ENCODE measurements at regions of chr16 and their contacts with region 1.

Region 1: GRCh38 chr16:70728150-70728549 is 42.3 kb upstream of the MTSS2 start:
- DNase-seq: no peak
- H3K4me3 ChIP-seq: no peak overlapping the region
- H3K27ac ChIP-seq: no peak overlapping the region
- H3K4me1 ChIP-seq: peaks cover 16 to 23% of the 10 kb centered on the region in 2 donors
- H3K27me3 ChIP-seq: no peaks in the 10 kb centered on the region
- CTCF ChIP-seq: no peak
- POLR2A ChIP-seq: no peak

Region 2: GRCh38 chr16:70743791-70744190 is 15.6 kb after region 1 on chr16:
- intact Hi-C with region 1: loop called (anchors 2 kb)
- DNase-seq: no peak
- H3K4me3 ChIP-seq: no peak overlapping the region
- H3K27ac ChIP-seq: no peak overlapping the region
- H3K4me1 ChIP-seq: peaks cover 25 to 56% of the 10 kb centered on the region in 2 donors
- H3K27me3 ChIP-seq: no peaks in the 10 kb centered on the region
- CTCF ChIP-seq: no peak
- POLR2A ChIP-seq: no peak